K562 (cell line): ENCODE measurements at regions of chr6 and their contacts with region 1.

Region 1: GRCh38 chr6:144104898-144105487 is 9.6 kb upstream of the SF3B5 start:
- DNase-seq: peak; percentile 31 to 82 (median 56)
- ATAC-seq: peak; percentile 91
- H3K4me3 ChIP-seq: no peak overlapping the region
- H3K27ac ChIP-seq: no peak overlapping the region
- H3K4me1 ChIP-seq: no peaks in the 10 kb centered on the region
- H3K27me3 ChIP-seq: peaks cover 0 to 2% of the 10 kb centered on the region in 2 experiments; a peak in 1 of 5 replicates
- CTCF ChIP-seq: peak; percentile 66 to 89 (median 70)
- EP300 ChIP-seq: no peak
- POLR2A ChIP-seq: no peak
- RAD21 ChIP-seq: peak; percentile 96 to 98

Region 2: DNA sequence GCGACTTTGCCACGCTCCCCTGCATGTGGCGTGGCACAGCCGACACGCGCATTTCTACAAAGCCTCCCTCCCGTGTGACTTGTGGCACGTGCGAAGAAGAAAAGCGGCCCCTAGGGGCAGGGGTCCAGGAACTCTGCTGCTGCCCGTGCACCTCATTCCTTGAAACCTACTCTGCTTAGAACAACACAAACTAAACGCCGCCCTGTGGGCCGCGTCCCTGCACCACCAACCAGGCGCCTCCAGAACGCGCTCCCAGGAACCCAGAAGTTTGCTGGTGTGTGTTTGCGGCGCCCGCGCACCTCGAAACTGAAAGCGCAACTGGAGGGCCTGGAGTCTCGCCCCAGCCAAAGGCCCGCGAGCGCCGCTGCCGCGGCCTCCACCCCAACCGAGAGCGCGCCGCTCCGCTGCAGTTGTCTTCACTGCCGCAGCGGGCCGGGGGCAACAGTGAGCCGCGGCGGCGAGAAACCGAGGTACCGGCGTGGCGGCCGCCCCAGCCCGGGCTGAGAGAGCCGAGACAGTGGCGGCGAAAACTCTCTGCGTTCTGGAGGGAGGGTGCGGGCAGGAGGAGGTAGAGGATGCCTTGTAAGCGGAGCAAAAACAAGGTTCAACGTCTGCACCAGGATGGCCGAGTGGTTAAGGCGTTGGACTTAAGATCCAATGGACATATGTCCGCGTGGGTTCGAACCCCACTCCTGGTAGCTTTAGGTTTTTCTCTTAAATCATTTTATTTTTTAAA is 111.1 kb after region 1 on chr6:
- CTCF ChIA-PET with region 1: interaction called, 13 read pairs
- POLR2A ChIA-PET with region 1: no interaction called
- in situ Hi-C with region 1: no loop called
- intact Hi-C with region 1: loop called (anchors 1 kb)
- DNase-seq: peak; percentile 89 to 96 (median 92)
- ATAC-seq: peak; percentile 94
- H3K4me3 ChIP-seq: peak overlapping the region; percentile 75
- H3K27ac ChIP-seq: peak overlapping the region; percentile 90
- H3K4me1 ChIP-seq: peaks cover 14% of the 10 kb centered on the region in 2 experiments
- H3K27me3 ChIP-seq: no peaks in the 10 kb centered on the region
- CTCF ChIP-seq: peak; percentile 75 to 90 (median 76)
- EP300 ChIP-seq: peak; percentile 78
- POLR2A ChIP-seq: peak; percentile 67
- RAD21 ChIP-seq: peak; percentile 25 to 56; a peak in 3 of 4 replicates

Region 3: DNA sequence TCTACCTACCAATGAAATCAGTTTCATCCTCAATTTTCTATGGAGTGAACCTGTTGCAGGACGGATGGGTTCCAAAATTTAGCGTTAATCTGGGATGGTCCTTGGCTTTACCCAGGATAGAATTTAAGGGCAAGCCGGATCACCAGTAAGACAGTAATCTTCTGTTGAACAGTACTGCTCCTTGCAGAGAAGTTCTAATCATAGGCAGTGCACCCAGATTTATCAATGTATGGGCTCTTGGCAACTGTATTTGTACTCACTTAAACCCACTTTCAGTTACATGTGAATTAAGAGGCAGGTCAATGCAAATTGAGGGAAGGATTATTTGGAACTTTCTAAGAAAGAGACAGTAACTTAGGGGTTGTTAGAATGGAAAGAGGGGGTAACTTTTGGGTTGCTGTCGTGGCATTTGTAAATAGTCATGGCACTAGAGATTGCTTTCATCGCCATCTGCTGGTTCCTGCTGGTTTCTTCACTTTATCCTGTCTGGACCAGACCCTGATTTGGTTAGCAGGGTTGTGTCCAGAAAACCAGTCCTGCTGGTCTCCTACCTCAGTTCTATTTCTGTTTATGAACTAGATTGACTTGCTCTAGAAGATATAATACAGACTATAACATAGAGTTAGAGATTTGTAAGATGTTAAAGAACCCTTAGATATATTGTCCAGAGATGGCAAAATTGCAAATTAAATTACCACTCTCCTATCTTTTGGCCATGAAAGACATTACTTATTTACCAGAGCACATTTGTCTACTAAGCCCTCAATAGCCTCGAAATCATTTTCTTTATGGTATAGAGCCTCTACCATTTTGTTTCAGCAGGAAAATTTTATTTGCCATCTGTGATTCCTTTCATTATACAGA is 826.4 kb after region 1 on chr6:
- CTCF ChIA-PET with region 1: interaction called, 4 read pairs
- POLR2A ChIA-PET with region 1: no interaction called
- in situ Hi-C with region 1: no loop called
- intact Hi-C with region 1: loop called (anchors 2 kb)
- DNase-seq: peak in 2 of 4 experiments; percentile 11 to 46
- ATAC-seq: peak; percentile 74
- H3K4me3 ChIP-seq: no peak overlapping the region
- H3K27ac ChIP-seq: no peak overlapping the region
- H3K4me1 ChIP-seq: no peaks in the 10 kb centered on the region
- H3K27me3 ChIP-seq: no peaks in the 10 kb centered on the region
- CTCF ChIP-seq: peak; percentile 32 to 67 (median 61); a peak in 5 of 6 replicates
- EP300 ChIP-seq: no peak
- POLR2A ChIP-seq: no peak
- RAD21 ChIP-seq: peak; percentile 60 to 84

Region 4: GRCh38 chr6:145214570-145214969 is 1109.6 kb after region 1 on chr6:
- CTCF ChIA-PET with region 1: no interaction called
- POLR2A ChIA-PET with region 1: no interaction called
- in situ Hi-C with region 1: no loop called
- intact Hi-C with region 1: loop called (anchors 5 kb)
- DNase-seq: peak in 2 of 4 experiments; percentile 13 to 33
- ATAC-seq: no peak
- H3K4me3 ChIP-seq: no peak overlapping the region
- H3K27ac ChIP-seq: no peak overlapping the region
- H3K4me1 ChIP-seq: no peaks in the 10 kb centered on the region
- H3K27me3 ChIP-seq: no peaks in the 10 kb centered on the region
- CTCF ChIP-seq: peak in 1 of 3 experiments; percentile 58; a peak in 3 of 6 replicates
- EP300 ChIP-seq: no peak
- POLR2A ChIP-seq: no peak
- RAD21 ChIP-seq: peak; percentile 54 to 62